Activated T-helper 1 cell treated with anti-CD3 and anti-CD28 coated beads, Interleukin-12 subunit alpha, Interleukin-12 subunit beta, Interleukin-2, Interleukin-4 antibody, amounts not matched to agents 30 ng/mL and 10 ng/mL and 1 ng/mL, durations not matched to agents 14 hours and 24 hours and 36 hours (primary cell): ENCODE measurements at regions of chr11 and their contacts with region 1.

Region 1: GRCh38 chr11:126480410-126481302 is 125.2 kb downstream of the ST3GAL4 start:
- DNase-seq: peak; percentile 66
- H3K4me3 Mint-ChIP-seq: peak overlapping the region; percentile 23
- H3K27ac Mint-ChIP-seq: peak overlapping the region; percentile 87
- H3K4me1 Mint-ChIP-seq: peaks cover 33% of the 10 kb centered on the region
- H3K27me3 Mint-ChIP-seq: peaks cover 3% of the 10 kb centered on the region

Region 2: DNA sequence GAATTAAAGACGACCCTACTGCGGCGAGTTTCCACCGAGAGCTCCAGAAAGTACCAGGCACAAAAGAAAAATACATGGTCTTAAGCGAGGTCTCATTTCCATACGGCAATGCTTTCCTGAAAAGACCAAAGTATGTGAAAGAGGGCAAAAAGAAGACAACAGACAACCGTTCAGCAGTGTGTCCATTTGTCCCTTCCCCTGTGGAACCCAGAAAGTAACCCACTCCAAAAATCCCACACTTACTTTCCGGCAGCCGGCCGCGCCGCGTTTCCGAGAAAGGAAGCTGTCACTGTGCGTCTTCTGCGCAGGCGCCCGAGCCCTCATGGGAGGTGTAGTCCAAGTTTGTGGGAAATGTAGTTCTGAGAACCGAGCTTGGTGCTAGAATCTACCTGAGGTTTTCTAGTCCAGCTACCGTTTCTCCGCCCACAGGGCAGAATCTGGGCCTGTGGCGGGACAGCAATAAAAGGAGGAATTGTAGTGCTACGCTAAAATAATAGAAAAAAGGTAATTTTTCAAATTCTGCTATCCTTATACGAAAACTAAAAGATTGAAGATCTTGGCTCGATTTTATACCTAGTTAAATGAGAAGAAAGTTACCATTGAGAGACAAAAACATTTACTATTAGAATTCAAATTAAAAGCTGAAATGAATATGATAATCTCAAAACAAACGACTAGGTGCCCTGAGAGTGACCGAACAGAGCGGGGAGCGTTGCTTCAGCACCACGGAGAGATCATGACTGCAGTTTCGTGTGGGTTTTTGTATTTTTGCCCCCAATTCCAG is 577.5 kb before region 1 on chr11 and contains the start of gene PUS3:
- intact Hi-C with region 1: loop called (anchors 5 kb)
- DNase-seq: peak; percentile 85
- H3K4me3 Mint-ChIP-seq: peak within 1 kb of the TSS; percentile 98
- H3K27ac Mint-ChIP-seq: peak within 1 kb of the TSS; percentile 88
- H3K4me1 Mint-ChIP-seq: peaks cover 28% of the 10 kb centered on the region
- H3K27me3 Mint-ChIP-seq: peaks cover 34% of the 10 kb centered on the region
- total RNA-seq, gene PUS3: 16.5 and 23.6 TPM in 2 replicates

Region 3: GRCh38 chr11:125923012-125923579 is 557.6 kb before region 1 on chr11:
- intact Hi-C with region 1: loop called (anchors 1 kb)
- DNase-seq: peak; percentile 37
- H3K4me3 Mint-ChIP-seq: no peak overlapping the region
- H3K27ac Mint-ChIP-seq: no peak overlapping the region
- H3K4me1 Mint-ChIP-seq: no peaks in the 10 kb centered on the region
- H3K27me3 Mint-ChIP-seq: peaks cover 21% of the 10 kb centered on the region

Region 4: DNA sequence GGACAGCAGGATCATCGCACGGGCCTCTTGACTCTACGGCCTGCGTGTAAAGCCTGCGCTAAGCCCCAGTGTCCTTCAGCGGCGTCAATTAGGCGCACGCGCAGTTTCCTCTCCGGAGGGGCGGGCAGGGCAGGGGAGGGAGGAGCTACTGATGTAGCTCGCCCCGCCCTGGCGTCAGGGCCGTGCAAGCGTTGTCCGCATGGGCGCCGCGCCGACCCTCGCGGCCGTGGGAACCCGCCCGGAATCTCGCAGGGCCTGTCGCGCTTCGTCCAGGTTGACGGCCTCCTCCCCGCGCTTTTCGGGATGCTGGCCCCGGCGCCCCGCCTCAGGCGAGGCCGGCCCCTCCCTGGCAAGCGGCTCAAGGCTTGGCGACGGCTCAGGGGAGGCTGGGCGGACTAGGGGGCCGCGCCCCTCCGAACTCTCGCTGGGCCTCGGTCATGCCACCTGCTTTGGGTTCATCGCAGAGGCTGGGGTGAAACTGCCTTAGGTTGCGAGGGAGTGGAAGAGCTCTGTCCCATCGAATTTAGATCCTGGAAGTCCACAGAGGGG is 64.0 kb before region 1 on chr11:
- intact Hi-C with region 1: loop called (anchors 1 kb)
- DNase-seq: peak; percentile 59
- H3K4me3 Mint-ChIP-seq: peak overlapping the region; percentile 62
- H3K27ac Mint-ChIP-seq: no peak overlapping the region
- H3K4me1 Mint-ChIP-seq: peaks cover 17% of the 10 kb centered on the region
- H3K27me3 Mint-ChIP-seq: peaks cover 5% of the 10 kb centered on the region